ENCODE measurements at regions of chr17 and their contacts with region 1.

Region 1: GRCh38 chr17:14300575-14301278 is at the start of gene HS3ST3B1:
- DNase-seq: peak; percentile 98
- H3K4me3 ChIP-seq: peak within 1 kb of the TSS; percentile 64
- H3K27me3 ChIP-seq: no peaks in the 10 kb centered on the region
- CTCF ChIP-seq: peak; percentile 22; the same call in 1 of the 2 replicates
- polyA plus RNA-seq, gene HS3ST3B1: 3.4 and 4.5 TPM in 2 replicates

Region 2: DNA sequence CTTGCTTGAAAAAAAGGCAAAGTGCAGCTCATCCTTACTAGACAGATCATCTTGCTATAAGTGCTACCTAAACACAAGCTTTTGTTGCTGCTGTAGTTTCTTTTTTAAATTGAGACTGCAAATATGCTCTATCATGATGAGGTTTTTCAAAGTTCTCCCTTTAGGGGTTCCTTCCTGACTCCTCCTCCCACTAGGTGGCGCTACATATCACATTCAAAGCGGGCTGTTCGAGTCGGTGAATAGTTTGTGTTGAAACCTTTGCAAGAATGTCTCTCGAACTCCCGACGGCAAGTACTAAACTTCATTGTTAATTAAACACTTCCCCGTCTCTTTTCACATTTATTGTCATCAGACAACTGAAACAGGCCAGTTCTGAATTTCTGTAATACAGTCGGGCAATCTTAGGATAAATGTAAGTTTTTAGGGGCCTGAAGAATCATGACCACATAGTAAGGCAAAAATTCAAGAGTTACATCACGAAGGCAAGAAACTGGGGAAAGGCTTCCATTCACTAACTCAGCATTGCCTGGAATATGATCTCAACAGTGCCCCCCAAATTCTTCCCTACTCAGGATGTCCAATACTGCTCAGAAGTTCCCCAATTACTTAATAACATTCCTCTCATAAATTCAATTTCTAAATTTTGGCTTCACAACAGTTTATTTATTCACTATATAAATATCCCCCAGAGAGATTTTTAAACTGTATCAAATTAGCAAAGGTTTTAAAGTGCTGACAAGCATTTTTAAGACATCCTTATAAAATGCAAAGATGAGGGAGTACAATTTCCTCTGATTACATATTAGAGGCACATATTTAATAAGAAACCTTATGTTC is 705.7 kb before region 1 on chr17:
- CTCF ChIA-PET with region 1: interaction called, 16 read pairs
- POLR2A ChIA-PET with region 1: interaction called, 3 read pairs
- DNase-seq: no peak
- H3K4me3 ChIP-seq: no peak overlapping the region
- H3K27me3 ChIP-seq: no peaks in the 10 kb centered on the region
- CTCF ChIP-seq: peak; percentile 84

Region 3: DNA sequence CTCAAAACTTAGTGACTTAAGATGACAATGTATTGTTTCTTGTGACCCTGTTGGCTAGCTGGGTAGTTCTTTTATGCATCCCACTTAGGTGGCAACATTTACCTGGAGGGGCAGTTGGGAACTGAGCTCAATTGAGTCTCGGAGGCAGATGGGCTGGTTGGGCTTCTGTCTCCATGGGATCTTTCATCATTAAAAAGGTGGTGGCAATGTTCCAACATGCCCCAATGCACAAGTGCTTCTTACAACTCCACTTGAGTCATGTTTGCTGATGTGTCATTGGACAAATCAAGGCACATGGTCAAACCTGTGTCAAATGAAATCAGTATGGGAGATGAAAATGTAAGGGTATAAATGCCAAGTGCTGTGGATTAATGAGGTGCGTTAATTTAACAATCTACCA is 11.6 kb before region 1 on chr17:
- CTCF ChIA-PET with region 1: interaction called, 10 read pairs
- POLR2A ChIA-PET with region 1: no interaction called
- DNase-seq: no peak
- H3K4me3 ChIP-seq: no peak overlapping the region
- H3K27me3 ChIP-seq: peaks cover 8% of the 10 kb centered on the region
- CTCF ChIP-seq: no peak

Region 4: DNA sequence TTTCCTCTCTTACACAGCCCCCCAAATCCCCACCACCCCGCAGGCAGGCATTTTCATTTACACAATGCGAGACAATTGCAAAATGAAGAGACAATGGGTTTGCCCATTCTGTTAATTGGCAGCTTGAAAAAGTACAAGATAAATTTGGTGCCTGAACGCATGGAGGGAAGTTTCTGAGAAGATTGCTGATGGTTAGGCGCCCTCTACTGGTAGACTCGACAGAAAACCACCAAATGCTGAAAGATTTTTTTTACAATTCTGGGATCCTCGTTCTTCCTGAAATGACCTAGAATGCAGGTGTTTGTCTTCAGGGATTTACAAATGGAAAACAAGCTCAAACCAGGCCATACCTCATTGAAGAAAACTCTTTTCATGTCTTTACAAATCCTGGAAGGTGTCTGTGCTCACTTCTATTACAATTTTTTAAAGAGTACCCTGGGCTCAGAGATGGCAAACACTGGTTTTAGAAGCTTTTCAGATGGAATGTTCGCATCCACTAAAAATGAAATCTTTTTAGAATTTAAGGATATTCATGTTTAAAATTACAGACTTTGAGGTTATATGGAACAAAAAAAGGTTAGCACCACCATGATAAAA is 625.9 kb after region 1 on chr17:
- CTCF ChIA-PET with region 1: interaction called, 15 read pairs
- POLR2A ChIA-PET with region 1: no interaction called
- DNase-seq: no peak
- H3K4me3 ChIP-seq: no peak overlapping the region
- H3K27me3 ChIP-seq: no peaks in the 10 kb centered on the region; the same call in 1 of the 2 replicates
- CTCF ChIP-seq: peak; percentile 70